ENCODE measurements at regions of chr5 and their contacts with region 1.

Region 1: GRCh38 chr5:108830705-108831276 is 83.1 kb downstream of the FER start:
- DNase-seq: no peak
- H3K4me3 ChIP-seq: no peak overlapping the region
- H3K27ac ChIP-seq: no peak overlapping the region
- H3K4me1 ChIP-seq: no peaks in the 10 kb centered on the region
- H3K27me3 ChIP-seq: no peaks in the 10 kb centered on the region
- CTCF ChIP-seq: no peak
- POLR2A ChIP-seq: no peak

Region 2: DNA sequence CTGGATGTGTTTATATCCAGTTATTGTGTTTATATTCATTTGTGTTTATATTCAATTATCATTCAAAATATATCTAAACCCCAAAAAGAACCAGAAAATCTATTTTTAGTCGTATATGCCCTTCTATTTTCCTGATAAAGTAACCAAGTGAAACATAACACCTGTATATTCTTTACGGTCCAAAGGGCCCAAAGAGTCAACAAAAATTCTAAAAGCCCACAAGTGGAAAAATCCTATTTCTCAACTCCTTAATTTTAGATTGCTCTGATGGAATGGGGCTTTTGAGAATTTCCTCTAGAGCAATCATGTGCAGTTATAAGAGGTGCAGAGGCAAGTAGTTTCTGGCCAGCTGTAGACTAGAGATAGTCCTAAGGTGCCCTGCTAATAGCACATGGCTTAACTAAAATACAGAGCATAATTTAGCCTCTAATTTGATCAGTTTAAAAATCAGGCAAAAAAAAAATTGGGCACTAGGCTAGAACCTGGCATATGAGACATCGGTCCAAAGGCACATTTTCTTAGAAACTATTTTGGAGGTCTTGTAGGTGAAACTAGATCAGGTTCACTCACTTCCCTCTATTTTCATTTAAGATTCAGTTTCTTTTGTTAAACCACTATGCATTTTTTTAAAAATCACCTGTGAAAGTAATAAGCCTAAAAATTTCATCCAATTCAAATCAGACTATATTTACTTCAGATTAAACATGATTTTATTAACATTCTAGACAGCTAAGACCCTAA is 704.9 kb before region 1 on chr5:
- intact Hi-C with region 1: loop called (anchors 5 kb)
- DNase-seq: no peak
- H3K4me3 ChIP-seq: no peak overlapping the region
- H3K27ac ChIP-seq: no peak overlapping the region
- H3K4me1 ChIP-seq: no peaks in the 10 kb centered on the region
- H3K27me3 ChIP-seq: no peaks in the 10 kb centered on the region
- CTCF ChIP-seq: no peak
- POLR2A ChIP-seq: no peak

Region 3: GRCh38 chr5:108749128-108749861 is 81.5 kb before region 1 on chr5:
- intact Hi-C with region 1: no loop called
- DNase-seq: peak in 1 of 2 donors; percentile 92
- H3K4me3 ChIP-seq: peak overlapping the region; percentile 77 to 86
- H3K27ac ChIP-seq: peak overlapping the region; percentile 95
- H3K4me1 ChIP-seq: peaks cover 6% of the 10 kb centered on the region
- H3K27me3 ChIP-seq: no peaks in the 10 kb centered on the region
- CTCF ChIP-seq: no peak
- POLR2A ChIP-seq: no peak